HEK293T (cell line): ENCODE measurements at regions of chr12 and their contacts with region 1.

Region 1: GRCh38 chr12:1634590-1635191 is 5.7 kb downstream of the WNT5B start:
- DNase-seq: peak; percentile 80

Region 2: GRCh38 chr12:1939801-1940607 is 305.3 kb after region 1 on chr12:
- CTCF ChIA-PET with region 1: interaction called, 13 read pairs
- POLR2A ChIA-PET with region 1: interaction called, 3 read pairs
- DNase-seq: peak; percentile 77